ENCODE measurements at regions of chr1 and their contacts with region 1.

Region 1: DNA sequence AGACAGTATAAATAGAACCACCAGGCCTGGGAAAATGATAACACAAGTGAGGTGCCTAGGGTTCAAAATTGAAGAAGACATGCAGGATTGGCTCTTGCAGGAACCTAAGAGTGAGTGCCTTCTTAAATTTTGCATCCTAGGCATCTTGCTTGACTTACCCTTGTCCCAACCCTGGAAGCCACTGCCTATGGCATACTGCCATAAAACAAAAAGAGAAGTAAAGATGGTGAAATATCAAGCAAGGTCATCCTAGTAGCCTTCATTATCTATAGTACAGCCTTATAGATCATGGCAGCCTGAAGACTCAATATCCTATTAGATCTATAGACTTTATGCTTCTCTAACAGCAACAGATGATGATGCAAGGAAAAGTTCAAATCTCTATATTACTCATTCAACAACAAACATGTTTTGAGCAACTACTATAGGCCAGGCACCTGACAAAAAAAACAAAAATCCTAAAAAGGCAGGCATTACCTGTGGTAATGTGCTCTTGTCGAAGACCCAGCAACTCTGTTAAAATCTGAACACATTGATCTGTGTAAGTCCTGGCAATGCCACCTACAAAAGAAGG is 6.3 kb downstream of the AP4B1 start:
- DNase-seq: no peak
- ATAC-seq: no peak
- H3K4me3 ChIP-seq: no peak overlapping the region
- H3K4me3 Mint-ChIP-seq: no peak overlapping the region
- H3K27ac ChIP-seq: no peak overlapping the region
- H3K27ac Mint-ChIP-seq: no peak overlapping the region
- H3K4me1 ChIP-seq: peaks cover 16 to 18% of the 10 kb centered on the region in 2 donors
- H3K4me1 Mint-ChIP-seq: peaks cover 25% of the 10 kb centered on the region
- H3K27me3 ChIP-seq: no peaks in the 10 kb centered on the region
- H3K27me3 Mint-ChIP-seq: no peaks in the 10 kb centered on the region
- CTCF ChIP-seq: no peak

Region 2: DNA sequence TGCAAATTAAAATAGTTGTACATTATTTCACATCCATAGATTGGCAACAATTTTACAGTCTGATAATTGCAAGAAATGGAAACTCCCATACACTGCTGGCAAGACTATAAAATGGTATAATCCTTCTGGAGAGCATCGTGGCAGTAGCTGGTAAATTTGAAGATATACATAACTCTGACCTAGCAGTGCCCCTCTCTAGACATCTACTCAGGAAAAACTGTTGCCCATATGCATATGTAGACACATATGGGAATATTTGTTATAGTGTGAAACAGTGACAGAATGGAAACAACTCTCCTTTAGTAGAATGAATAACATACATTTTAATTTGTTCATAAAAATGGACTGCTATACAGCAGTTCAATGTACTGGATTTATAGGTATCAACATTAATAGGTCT is 316.2 kb before region 1 on chr1:
- CTCF ChIA-PET with region 1: no interaction called
- POLR2A ChIA-PET with region 1: interaction called, 10 read pairs
- intact Hi-C with region 1: no loop called
- DNase-seq: no peak
- ATAC-seq: no peak
- H3K4me3 ChIP-seq: no peak overlapping the region
- H3K4me3 Mint-ChIP-seq: no peak overlapping the region
- H3K27ac ChIP-seq: no peak overlapping the region
- H3K27ac Mint-ChIP-seq: no peak overlapping the region
- H3K4me1 ChIP-seq: no peaks in the 10 kb centered on the region
- H3K4me1 Mint-ChIP-seq: no peaks in the 10 kb centered on the region
- H3K27me3 ChIP-seq: no peaks in the 10 kb centered on the region
- H3K27me3 Mint-ChIP-seq: peaks cover 3% of the 10 kb centered on the region
- CTCF ChIP-seq: no peak

Region 3: DNA sequence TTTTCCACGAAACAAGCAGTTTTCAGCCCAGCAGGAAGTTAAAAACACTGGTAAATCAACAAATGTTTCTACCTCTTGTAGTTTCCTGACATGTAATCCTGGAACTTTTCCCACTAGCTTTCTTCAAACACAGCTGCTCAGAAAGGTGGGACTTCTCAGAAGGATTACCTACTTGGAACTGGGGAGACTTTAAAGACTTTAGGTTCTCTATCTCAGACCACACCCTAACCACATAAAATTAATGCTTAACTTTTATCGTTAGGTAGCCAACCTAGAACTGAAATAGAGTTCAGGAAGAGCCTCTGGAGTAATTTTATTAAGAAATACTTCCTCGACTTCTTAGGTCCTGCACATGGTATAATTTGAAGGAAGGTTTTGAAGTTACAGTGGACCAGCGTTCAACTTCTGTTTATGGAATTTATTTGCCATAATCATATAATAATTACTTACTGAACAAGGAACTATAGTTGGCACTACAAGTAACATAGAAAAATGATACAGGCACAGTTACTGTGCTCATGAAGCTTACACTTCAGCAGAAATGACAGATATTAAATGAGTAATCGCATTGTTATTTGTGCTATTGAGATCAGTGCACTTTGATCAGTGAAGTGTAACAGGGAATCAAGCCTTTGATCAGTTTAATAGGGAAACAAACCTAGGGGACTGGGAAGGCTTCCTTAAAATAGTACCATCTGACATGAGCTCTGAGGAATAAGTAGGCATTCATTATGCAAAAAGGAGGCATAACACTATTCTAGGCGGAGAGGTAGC is 10.7 kb before region 1 on chr1 and contains the start of gene BCL2L15:
- CTCF ChIA-PET with region 1: interaction called, 4 read pairs
- POLR2A ChIA-PET with region 1: no interaction called
- intact Hi-C with region 1: loop called (anchors 2 kb)
- DNase-seq: no peak
- ATAC-seq: no peak
- H3K4me3 ChIP-seq: no peak within 1 kb of the TSS
- H3K4me3 Mint-ChIP-seq: no peak within 1 kb of the TSS
- H3K27ac ChIP-seq: no peak within 1 kb of the TSS
- H3K27ac Mint-ChIP-seq: no peak within 1 kb of the TSS
- H3K4me1 ChIP-seq: peaks cover 0 to 3% of the 10 kb centered on the region in 2 donors
- H3K4me1 Mint-ChIP-seq: peaks cover 4% of the 10 kb centered on the region
- H3K27me3 ChIP-seq: no peaks in the 10 kb centered on the region
- H3K27me3 Mint-ChIP-seq: no peaks in the 10 kb centered on the region
- CTCF ChIP-seq: no peak
- total RNA-seq, gene BCL2L15: 1.3 and 1.6 TPM in 2 replicates

Region 4: GRCh38 chr1:113938192-113938591 is 39.9 kb after region 1 on chr1:
- CTCF ChIA-PET with region 1: no interaction called
- POLR2A ChIA-PET with region 1: no interaction called
- intact Hi-C with region 1: no loop called
- DNase-seq: no peak
- ATAC-seq: no peak
- H3K4me3 ChIP-seq: no peak overlapping the region
- H3K4me3 Mint-ChIP-seq: no peak overlapping the region
- H3K27ac ChIP-seq: no peak overlapping the region
- H3K27ac Mint-ChIP-seq: no peak overlapping the region
- H3K4me1 ChIP-seq: peaks cover 19 to 24% of the 10 kb centered on the region in 2 donors
- H3K4me1 Mint-ChIP-seq: peaks cover 56% of the 10 kb centered on the region
- H3K27me3 ChIP-seq: no peaks in the 10 kb centered on the region
- H3K27me3 Mint-ChIP-seq: no peaks in the 10 kb centered on the region
- CTCF ChIP-seq: no peak